Mammary epithelial cell (primary cell): ENCODE measurements at regions of chr14 and their contacts with region 1.

Region 1: GRCh38 chr14:33839193-33840076 is 111.4 kb downstream of the EGLN3 start:
- DNase-seq: peak; percentile 24
- H3K4me3 ChIP-seq: no peak overlapping the region
- H3K27ac ChIP-seq: no peak overlapping the region
- H3K4me1 ChIP-seq: peaks cover 16% of the 10 kb centered on the region
- H3K27me3 ChIP-seq: no peaks in the 10 kb centered on the region
- CTCF ChIP-seq: peak; percentile 79 to 90

Region 2: GRCh38 chr14:33871394-33871793 is 32.0 kb after region 1 on chr14:
- CTCF ChIA-PET with region 1: no interaction called
- dilution Hi-C with region 1: no loop called
- in situ Hi-C with region 1: no loop called
- intact Hi-C with region 1: no loop called
- DNase-seq: no peak
- H3K4me3 ChIP-seq: no peak overlapping the region
- H3K27ac ChIP-seq: no peak overlapping the region
- H3K4me1 ChIP-seq: no peaks in the 10 kb centered on the region
- H3K27me3 ChIP-seq: no peaks in the 10 kb centered on the region
- CTCF ChIP-seq: no peak

Region 3: DNA sequence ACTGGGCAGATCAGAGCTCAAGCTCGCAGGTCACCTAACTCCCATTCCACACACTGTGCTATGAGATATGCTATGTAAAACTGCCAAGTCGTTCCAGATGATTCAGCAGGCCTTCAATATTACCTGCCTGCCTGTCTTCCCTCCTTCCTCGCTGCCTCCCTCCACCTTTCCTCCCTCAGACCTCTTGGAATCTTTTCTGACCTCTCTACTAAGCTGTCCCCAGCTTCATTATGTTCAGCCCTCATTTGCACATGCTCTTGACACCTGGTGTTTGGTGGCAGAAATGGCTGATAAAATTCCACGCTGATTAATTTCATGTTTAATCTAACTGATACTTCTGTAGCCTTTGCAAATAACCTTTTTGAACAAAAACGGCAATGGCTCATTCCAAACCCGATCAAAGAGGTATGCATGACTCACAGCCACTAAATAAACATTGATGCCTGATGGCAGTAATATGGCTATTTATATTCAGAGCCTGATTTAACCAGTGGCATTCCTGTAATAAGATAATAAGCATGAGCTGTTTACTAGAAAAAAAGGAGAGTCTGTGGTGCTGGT is 242.2 kb after region 1 on chr14:
- CTCF ChIA-PET with region 1: no interaction called
- dilution Hi-C with region 1: no loop called
- in situ Hi-C with region 1: loop called in 1 of 2 experiments (anchors 10 kb)
- intact Hi-C with region 1: no loop called
- DNase-seq: peak; percentile 75
- H3K4me3 ChIP-seq: peak overlapping the region in 1 of 3 experiments; percentile 13
- H3K27ac ChIP-seq: peak overlapping the region; percentile 65
- H3K4me1 ChIP-seq: peaks cover 13% of the 10 kb centered on the region
- H3K27me3 ChIP-seq: no peaks in the 10 kb centered on the region
- CTCF ChIP-seq: no peak

Region 4: GRCh38 chr14:34300882-34301734 is 461.7 kb after region 1 on chr14:
- CTCF ChIA-PET with region 1: interaction called, 5 read pairs
- dilution Hi-C with region 1: loop called (anchors 5 kb)
- in situ Hi-C with region 1: loop called (anchors 5 to 10 kb)
- intact Hi-C with region 1: loop called (anchors 1 kb)
- DNase-seq: peak; percentile 46
- H3K4me3 ChIP-seq: no peak overlapping the region
- H3K27ac ChIP-seq: no peak overlapping the region
- H3K4me1 ChIP-seq: peaks cover 18% of the 10 kb centered on the region
- H3K27me3 ChIP-seq: no peaks in the 10 kb centered on the region
- CTCF ChIP-seq: peak; percentile 70 to 71

Region 5: DNA sequence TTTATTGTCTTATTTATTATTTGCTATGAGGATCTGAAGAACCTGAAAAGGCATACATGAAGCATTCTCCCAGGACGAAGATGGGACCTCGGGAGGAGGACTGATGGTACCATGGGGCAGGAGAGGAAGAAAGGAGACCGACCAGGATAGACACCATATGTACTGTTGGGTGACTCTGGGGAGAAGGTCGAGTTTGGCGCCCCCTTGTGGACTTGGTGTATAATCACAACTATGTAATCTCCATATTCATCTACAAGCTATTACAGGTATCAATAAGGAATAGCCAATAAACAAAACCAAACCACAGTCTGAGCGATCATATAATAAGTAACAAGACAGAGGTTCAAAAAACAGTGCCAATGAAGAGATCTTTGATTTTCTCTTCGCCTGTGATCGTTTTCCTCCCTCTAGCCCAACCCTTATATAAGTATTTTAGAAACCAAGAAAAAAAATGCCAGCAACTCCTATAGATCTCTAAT is 483.5 kb after region 1 on chr14:
- CTCF ChIA-PET with region 1: no interaction called
- dilution Hi-C with region 1: no loop called
- in situ Hi-C with region 1: no loop called
- intact Hi-C with region 1: loop called (anchors 2 kb)
- DNase-seq: peak; percentile 32
- H3K4me3 ChIP-seq: no peak overlapping the region
- H3K27ac ChIP-seq: no peak overlapping the region
- H3K4me1 ChIP-seq: no peaks in the 10 kb centered on the region
- H3K27me3 ChIP-seq: no peaks in the 10 kb centered on the region
- CTCF ChIP-seq: peak; percentile 76 to 77